BJ (cell line): ENCODE measurements at regions of chrX and their contacts with region 1.

Region 1: DNA sequence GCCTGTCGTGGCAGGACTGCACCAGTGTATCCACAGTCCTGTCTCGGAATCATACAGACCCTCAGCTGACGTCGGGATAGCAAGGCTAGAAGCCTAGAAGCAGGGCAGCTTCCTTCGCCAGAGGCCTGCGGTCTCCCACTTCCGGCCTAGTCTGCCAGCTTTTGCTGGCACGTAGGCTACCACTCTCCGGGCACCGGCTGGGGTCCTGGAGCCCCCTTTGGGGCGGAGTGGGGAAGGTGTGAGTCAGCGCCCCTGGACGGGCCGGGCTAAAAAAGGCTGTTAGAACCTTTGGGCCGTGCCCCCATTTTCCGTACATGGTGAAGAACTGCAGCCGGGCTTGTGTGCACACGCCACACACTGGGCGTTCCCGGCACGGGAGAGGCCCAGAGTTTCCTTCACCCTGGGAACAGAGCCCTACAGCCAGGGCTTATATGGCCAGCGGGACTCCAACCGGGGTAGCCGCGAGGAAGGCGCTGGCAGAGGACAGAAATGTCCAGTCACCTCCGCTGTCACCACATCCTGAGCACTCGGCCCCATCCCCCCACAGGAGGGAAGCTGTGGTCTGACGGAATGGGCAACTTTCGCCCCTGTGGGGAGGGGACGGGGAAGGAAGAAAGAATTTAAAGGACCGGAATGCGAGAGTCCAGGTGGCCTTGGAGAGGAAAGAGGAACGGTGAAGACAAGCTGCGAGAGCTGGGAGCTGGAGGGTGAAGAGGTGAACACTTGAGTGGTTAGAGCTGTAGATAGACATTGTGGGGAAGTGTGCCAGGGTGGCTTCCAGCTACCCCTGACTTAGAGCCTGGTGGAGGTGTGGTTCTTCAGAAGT is 4.6 kb downstream of the MAGIX start:
- DNase-seq: peak; percentile 11
- H3K4me3 ChIP-seq: peak overlapping the region; percentile 29
- H3K27me3 ChIP-seq: no peaks in the 10 kb centered on the region
- CTCF ChIP-seq: no peak

Region 2: GRCh38 chrX:48945516-48946348 is 221.4 kb before region 1 on chrX:
- CTCF ChIA-PET with region 1: no interaction called
- POLR2A ChIA-PET with region 1: no interaction called
- DNase-seq: no peak
- H3K4me3 ChIP-seq: no peak overlapping the region
- H3K27me3 ChIP-seq: no peaks in the 10 kb centered on the region
- CTCF ChIP-seq: peak; percentile 80

Region 3: GRCh38 chrX:48989483-48989882 is 177.6 kb before region 1 on chrX:
- CTCF ChIA-PET with region 1: no interaction called
- POLR2A ChIA-PET with region 1: no interaction called
- DNase-seq: no peak
- H3K4me3 ChIP-seq: no peak overlapping the region
- H3K27me3 ChIP-seq: no peaks in the 10 kb centered on the region
- CTCF ChIP-seq: no peak

Region 4: DNA sequence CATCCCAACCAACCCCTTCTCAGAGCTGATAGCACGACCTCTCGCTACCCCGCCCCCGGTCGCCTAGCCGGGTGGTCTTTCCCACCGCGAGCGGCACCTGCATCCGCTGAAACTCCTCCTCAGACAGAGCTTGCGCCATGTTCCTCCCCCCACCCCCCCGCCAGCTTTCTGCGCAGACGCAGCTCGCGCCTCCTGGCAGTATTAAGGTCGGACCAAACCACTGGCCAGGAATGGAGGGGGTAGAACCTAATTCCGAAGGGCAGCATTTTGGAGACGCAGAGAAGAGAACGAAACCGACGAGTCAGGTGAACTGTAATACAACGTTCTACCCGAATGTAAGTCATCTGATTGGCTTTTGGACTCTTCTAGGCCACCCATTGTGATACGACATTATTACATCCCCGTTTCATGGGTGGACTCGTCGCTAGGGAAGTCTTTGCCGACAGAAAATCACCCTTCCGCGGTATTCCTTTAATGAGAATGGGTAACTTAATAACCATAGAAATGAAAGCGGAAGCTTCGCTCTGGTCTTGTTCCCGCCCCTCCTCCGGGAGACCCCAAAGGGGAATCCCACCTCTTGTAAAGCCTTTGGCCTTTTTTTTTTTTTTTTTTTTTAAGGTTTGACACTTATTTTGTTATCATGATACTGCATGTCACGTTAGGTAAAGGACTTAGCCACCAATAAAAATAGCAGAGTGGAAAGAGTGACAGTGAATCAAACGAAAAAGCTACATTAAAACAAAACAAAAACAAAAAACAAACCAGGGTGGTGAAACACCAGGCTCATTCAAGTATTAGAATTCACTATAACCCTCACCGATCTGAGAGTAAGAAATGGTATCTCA is 164.8 kb before region 1 on chrX and contains the start of gene GRIPAP1:
- CTCF ChIA-PET with region 1: no interaction called
- POLR2A ChIA-PET with region 1: interaction called, 21 read pairs
- DNase-seq: no peak
- H3K4me3 ChIP-seq: peak within 1 kb of the TSS; percentile 55
- H3K27me3 ChIP-seq: no peaks in the 10 kb centered on the region
- CTCF ChIP-seq: no peak
- polyA plus RNA-seq, gene GRIPAP1: 23.4 and 23.5 TPM in 2 replicates

Region 5: DNA sequence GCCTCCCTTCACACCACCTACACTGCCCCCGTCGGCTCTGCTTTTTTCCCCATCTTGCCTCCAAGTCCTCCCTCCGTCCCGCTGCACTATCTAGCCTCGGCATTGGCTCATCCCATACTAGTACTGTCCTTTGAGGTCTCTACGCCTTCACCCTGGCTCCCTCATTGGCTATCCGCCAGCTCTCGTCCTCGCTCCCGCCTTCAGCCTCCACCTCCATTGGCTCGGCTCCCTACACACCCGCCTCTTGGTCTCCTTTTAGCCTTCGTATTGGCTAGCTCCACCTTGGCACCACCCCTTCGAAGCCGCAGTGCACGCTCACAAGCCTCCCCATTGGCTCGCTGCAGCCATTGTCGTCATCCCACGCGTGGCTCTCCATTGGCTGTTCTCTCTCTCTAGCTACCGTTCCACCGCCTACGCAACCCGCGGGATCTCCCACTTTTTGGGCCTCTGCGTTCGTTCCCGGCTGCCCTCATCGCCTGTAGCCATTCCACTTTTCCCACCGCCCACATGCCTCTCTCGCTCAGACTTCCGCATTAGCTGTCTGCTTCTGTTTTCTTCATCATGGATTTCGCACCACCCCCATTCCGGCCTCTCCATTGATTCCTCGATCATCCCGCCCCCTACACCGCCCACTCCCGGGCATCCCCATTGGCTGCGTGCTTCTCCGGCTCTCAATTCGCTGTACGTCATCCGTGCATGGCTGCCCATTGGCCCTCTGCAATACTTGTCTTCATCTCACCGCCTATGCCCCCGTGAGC is 102.1 kb after region 1 on chrX:
- CTCF ChIA-PET with region 1: no interaction called
- POLR2A ChIA-PET with region 1: no interaction called
- DNase-seq: peak; percentile 85
- H3K4me3 ChIP-seq: peak overlapping the region; percentile 65
- H3K27me3 ChIP-seq: no peaks in the 10 kb centered on the region
- CTCF ChIP-seq: no peak